OCI-LY7 (cell line): ENCODE measurements at regions of chr2 and their contacts with region 1.

Region 1: DNA sequence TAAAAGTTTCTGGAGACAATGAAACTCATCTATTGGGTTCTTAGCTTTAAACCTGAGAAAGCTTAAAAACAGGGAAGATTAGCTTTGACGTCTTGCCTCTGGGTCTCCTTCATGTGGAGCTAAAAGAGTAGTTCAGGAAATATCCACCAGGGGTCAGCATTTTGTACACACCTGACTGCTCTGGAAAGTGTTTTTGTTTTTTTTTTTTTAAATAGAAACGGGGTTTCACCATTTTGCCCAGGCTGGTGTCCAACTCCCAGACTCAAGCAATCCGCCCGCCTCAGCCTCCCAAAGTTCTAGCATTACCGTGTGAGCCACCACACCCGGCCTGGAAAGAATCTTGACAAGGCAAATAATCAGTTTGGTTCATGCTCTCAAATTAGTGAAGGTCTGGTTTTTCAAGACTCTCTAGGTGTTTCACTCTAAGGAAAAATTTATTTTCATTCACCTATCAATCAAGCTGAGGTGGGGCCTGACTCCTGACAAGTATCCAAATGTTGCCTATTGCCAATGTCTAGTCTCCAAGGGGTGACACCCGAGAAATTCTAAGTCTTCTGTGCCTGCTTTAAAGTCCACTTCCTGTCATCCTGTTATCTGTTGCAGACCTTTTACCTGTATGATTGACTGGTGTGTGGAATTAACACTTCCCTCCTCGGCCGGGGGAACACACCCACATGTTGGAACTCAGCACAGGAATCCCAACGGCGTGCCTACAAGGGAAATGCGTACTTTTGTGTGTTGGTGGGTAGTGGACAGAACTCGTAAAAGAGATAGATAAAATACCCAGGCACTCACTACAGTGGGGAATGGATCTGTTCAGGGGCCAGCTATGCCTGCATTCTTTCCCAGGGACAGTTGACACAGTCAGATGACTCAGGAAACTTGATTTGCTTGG is 11.3 kb downstream of the IL1RN start:
- DNase-seq: peak; percentile 83
- H3K4me3 ChIP-seq: peak overlapping the region; percentile 19
- H3K27ac ChIP-seq: no peak overlapping the region
- H3K4me1 ChIP-seq: peaks cover 7% of the 10 kb centered on the region
- CTCF ChIP-seq: peak; percentile 88

Region 2: DNA sequence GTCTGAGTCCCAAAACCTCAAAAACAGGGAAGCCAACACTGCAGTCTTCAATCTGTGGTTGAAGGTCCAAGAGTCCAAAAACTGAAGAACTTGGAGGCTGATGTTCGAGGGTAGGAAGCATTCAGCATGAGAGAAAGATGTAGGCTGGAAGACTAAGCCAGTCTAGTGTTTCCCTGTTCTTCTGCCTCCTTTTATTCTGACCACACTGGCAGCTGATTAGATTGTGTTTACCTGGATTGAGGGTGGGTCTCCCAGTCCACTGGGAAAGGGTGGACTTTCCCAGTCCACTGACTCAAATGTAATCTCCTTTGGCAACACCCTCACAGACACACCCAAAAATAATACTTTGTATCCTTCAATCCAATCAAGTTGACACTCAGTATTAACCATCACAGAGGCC is 274.6 kb before region 1 on chr2:
- CTCF ChIA-PET with region 1: no interaction called
- POLR2A ChIA-PET with region 1: no interaction called
- intact Hi-C with region 1: no loop called
- DNase-seq: no peak
- H3K4me3 ChIP-seq: no peak overlapping the region
- H3K27ac ChIP-seq: no peak overlapping the region
- H3K4me1 ChIP-seq: no peaks in the 10 kb centered on the region
- CTCF ChIP-seq: no peak

Region 3: GRCh38 chr2:113124181-113124961 is 14.3 kb before region 1 on chr2:
- CTCF ChIA-PET with region 1: no interaction called
- POLR2A ChIA-PET with region 1: no interaction called
- intact Hi-C with region 1: no loop called
- DNase-seq: no peak
- H3K4me3 ChIP-seq: no peak overlapping the region
- H3K27ac ChIP-seq: no peak overlapping the region
- H3K4me1 ChIP-seq: peaks cover 6% of the 10 kb centered on the region
- CTCF ChIP-seq: no peak

Region 4: DNA sequence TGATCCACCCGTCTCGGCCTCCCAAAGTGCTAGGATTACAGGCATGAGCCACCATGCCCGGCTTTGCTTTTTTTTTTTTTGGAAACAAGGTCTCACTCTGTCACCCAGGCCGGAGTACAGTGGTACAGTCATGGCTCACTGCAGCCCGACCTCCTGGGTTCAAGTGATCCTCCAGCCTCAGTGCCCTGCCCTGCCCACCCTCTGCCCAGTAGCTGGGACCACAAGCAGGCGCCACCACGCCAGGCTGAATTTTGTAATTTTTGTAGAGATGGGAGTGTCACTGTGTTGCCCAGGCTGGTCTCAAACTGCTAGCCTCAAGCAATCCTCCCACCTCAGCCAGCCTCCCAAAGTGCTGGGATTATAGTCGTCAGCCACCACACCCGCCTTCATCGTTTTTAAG is 23.5 kb after region 1 on chr2:
- CTCF ChIA-PET with region 1: no interaction called
- POLR2A ChIA-PET with region 1: no interaction called
- intact Hi-C with region 1: no loop called
- DNase-seq: no peak
- H3K4me3 ChIP-seq: no peak overlapping the region
- H3K27ac ChIP-seq: no peak overlapping the region
- H3K4me1 ChIP-seq: no peaks in the 10 kb centered on the region
- CTCF ChIP-seq: no peak

Region 5: DNA sequence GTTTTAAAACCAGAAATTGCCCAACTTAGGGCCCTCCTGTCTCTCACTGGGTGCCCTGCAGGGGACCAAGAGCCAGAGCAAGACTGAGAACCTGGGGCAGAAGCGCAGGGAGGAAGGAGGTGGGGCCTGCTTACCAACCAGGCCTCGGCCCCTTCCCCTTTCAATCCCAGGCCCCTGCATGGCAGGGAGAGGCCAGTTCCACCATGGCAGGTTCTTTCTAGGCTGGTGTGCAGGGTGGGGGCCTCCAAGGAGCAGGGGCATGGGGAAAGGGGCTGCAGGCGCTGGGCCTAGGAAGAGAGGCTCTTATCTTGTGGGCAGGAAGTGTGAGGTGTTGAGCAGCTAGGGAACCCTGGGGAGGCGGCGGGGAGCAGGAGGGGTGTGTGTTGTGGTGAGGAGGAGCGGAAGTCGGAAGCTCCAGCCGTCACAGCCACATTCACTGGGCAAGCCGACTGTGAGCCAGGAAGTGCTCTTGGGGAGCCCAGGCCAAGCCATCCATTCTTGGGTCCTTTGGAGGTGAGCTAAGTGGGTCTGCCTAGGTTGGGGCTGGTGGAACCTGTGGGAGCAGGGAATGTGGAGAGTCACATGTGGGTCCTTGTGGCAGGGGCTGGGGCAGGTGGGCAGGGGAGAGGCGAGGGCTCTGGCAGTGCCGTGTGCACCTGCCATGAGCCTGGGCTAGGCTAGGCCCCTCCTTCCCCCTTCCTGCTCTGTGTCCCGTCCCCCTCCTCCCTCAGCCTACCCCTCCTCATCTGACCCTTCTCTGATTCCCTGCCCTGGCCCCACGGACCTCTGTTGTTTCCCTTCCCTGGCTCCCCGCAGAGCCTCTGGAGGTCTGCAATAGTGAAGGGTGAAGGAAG is 35.1 kb after region 1 on chr2 and contains the start of gene PSD4:
- CTCF ChIA-PET with region 1: interaction called, 17 read pairs
- POLR2A ChIA-PET with region 1: interaction called, 25 read pairs
- intact Hi-C with region 1: loop called (anchors 1 kb)
- DNase-seq: peak; percentile 91
- H3K4me3 ChIP-seq: peak within 1 kb of the TSS; percentile 90
- H3K27ac ChIP-seq: peak within 1 kb of the TSS; percentile 87
- H3K4me1 ChIP-seq: peaks cover 30% of the 10 kb centered on the region
- CTCF ChIP-seq: peak; percentile 43
- total RNA-seq, gene PSD4: 78.2 and 99.6 TPM in 2 replicates

Region 6: GRCh38 chr2:113198790-113199612 is 60.3 kb after region 1 on chr2:
- CTCF ChIA-PET with region 1: interaction called, 6 read pairs
- POLR2A ChIA-PET with region 1: interaction called, 4 read pairs
- intact Hi-C with region 1: loop called (anchors 1 kb)
- DNase-seq: peak; percentile 65
- H3K4me3 ChIP-seq: no peak overlapping the region
- H3K27ac ChIP-seq: no peak overlapping the region
- H3K4me1 ChIP-seq: peaks cover 15% of the 10 kb centered on the region
- CTCF ChIP-seq: peak; percentile 77

Region 7: DNA sequence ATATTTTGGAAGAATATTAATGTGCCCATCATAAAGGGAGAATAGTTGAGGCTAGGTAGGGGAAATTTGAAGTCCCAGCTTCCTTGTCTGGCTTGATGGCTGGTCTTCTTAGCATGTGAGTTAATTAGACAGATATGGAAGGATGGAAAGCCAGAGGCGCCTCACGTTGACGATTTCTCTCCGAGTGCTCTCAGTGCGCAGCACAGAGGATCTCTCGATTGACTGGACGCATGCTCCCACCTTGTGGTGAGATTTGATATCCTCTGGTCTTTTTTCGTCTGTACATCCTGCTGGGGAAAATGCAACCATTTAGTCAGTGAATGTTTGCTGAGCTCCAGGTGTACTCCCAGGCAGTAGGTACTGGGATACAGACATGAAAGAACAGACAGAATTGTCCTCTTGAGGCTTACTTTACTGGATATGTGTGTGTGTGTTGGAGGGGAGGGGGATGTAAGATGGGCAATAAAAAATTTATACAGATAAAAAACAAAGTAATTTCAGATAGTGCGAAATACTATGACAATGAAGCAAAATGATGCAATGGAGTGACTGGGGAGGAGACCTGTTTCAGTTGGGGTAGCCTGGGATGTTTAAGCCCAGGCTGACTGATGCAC is 231.9 kb after region 1 on chr2:
- CTCF ChIA-PET with region 1: no interaction called
- POLR2A ChIA-PET with region 1: no interaction called
- intact Hi-C with region 1: loop called (anchors 5 kb)
- DNase-seq: peak; percentile 59
- H3K4me3 ChIP-seq: no peak overlapping the region
- H3K27ac ChIP-seq: no peak overlapping the region
- H3K4me1 ChIP-seq: no peaks in the 10 kb centered on the region
- CTCF ChIP-seq: peak; percentile 75

Region 8: DNA sequence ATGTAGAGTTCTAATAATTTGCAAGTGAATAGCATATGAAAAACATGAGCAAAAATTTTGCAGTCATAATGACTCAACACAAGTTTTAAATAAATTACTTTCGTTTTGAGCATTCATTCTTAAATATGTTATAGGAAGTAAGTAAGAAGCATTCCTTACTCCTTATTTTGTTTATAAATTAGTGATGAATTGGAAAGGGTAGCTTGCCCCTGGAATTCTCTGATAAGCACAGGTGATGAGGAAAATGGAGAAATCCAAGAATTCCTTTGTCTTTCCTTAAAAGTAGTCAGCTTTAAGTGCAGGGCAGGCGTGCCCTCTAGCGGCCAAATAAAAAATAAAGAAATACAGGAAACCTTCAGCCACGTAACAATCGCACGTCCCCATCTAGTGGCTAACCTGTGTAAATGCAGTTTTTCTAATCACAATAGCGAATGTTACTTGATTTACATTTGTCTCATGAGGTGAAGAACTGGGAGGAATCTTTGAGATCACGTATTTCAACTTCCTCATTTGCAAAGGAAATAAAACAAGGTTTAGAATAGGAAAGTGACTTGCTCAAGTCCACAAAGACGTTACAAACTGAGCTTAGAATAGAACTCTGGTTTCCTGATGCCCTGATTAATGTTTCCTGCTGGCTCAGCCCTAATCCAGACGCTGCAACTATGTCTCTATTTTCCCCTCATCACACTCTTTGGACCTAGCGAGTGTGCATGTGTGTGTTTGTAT is 251.6 kb after region 1 on chr2:
- CTCF ChIA-PET with region 1: interaction called, 4 read pairs
- POLR2A ChIA-PET with region 1: no interaction called
- intact Hi-C with region 1: loop called (anchors 2 kb)
- DNase-seq: peak; percentile 87
- H3K4me3 ChIP-seq: peak overlapping the region; percentile 4
- H3K27ac ChIP-seq: peak overlapping the region; percentile 38
- H3K4me1 ChIP-seq: peaks cover 4% of the 10 kb centered on the region
- CTCF ChIP-seq: peak; percentile 99

Region 9: GRCh38 chr2:113700186-113700841 is 561.6 kb after region 1 on chr2:
- CTCF ChIA-PET with region 1: no interaction called
- POLR2A ChIA-PET with region 1: no interaction called
- intact Hi-C with region 1: no loop called
- DNase-seq: peak; percentile 77
- H3K4me3 ChIP-seq: peak overlapping the region; percentile 13
- H3K27ac ChIP-seq: no peak overlapping the region
- H3K4me1 ChIP-seq: peaks cover 10% of the 10 kb centered on the region
- CTCF ChIP-seq: peak; percentile 70